Caco-2 (cell line): ENCODE measurements at regions of chr1 and their contacts with region 1.

Region 1: DNA sequence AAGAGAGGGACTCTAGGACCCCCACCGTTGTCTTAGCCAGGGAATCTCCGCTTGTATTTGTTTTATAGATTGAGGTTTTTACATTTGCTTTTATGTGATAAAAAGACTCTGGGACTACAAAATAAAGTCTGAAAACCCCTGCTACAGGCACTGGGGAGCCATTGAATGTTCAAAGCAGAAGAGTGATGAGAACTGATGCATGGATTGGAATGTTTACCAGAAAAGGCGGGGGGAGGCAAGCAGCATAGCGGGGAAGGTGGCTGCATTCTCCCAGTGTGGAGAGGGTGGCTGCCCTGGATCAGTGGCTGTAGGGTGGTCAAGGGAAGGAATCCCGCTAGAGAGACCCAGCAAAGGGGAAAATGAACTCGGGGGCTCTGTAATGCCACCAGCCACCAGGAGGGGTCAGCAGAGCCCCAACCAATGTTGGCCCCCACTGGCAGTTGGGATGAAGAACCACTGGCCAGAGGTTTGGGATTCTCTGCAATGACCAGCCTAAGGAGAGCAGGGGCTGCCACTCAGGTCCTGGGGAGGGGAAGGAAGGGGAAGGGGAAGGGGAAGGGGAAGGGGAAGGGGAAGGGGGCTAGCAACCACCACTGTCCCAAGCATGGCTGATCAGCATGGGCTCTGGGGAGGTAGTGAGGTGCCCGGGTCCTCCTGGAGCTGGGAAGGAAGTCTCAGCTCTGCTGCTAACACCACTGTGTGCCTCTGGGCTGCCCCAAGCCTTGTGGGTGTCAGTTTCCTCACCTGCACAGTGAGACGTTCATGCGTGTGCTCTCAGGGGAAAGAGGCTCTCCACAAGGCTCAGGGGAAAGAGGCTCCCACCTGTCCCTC is 19.2 kb upstream of the PEF1 start:
- DNase-seq: peak; percentile 44 to 73
- H3K4me3 ChIP-seq: no peak overlapping the region
- H3K4me3 Mint-ChIP-seq: no peak overlapping the region
- H3K27ac Mint-ChIP-seq: no peak overlapping the region
- H3K4me1 ChIP-seq: no peaks in the 10 kb centered on the region
- H3K4me1 Mint-ChIP-seq: no peaks in the 10 kb centered on the region
- H3K27me3 ChIP-seq: no peaks in the 10 kb centered on the region
- H3K27me3 Mint-ChIP-seq: no peaks in the 10 kb centered on the region
- CTCF ChIP-seq: peak; percentile 80 to 88

Region 2: GRCh38 chr1:31694069-31694963 is 30.5 kb after region 1 on chr1:
- CTCF ChIA-PET with region 1: interaction called, 10 read pairs
- POLR2A ChIA-PET with region 1: no interaction called
- intact Hi-C with region 1: no loop called
- DNase-seq: no peak
- H3K4me3 ChIP-seq: no peak overlapping the region
- H3K4me3 Mint-ChIP-seq: no peak overlapping the region
- H3K27ac Mint-ChIP-seq: no peak overlapping the region
- H3K4me1 ChIP-seq: no peaks in the 10 kb centered on the region
- H3K4me1 Mint-ChIP-seq: no peaks in the 10 kb centered on the region
- H3K27me3 ChIP-seq: no peaks in the 10 kb centered on the region
- H3K27me3 Mint-ChIP-seq: no peaks in the 10 kb centered on the region
- CTCF ChIP-seq: no peak

Region 3: GRCh38 chr1:31701137-31701736 is 37.4 kb after region 1 on chr1:
- CTCF ChIA-PET with region 1: no interaction called
- POLR2A ChIA-PET with region 1: no interaction called
- intact Hi-C with region 1: loop called (anchors 5 kb)
- DNase-seq: peak; percentile 50 to 68
- H3K4me3 ChIP-seq: no peak overlapping the region
- H3K4me3 Mint-ChIP-seq: no peak overlapping the region
- H3K27ac Mint-ChIP-seq: no peak overlapping the region
- H3K4me1 ChIP-seq: peaks cover 13% of the 10 kb centered on the region
- H3K4me1 Mint-ChIP-seq: peaks cover 7% of the 10 kb centered on the region
- H3K27me3 ChIP-seq: no peaks in the 10 kb centered on the region
- H3K27me3 Mint-ChIP-seq: no peaks in the 10 kb centered on the region
- CTCF ChIP-seq: no peak

Region 4: GRCh38 chr1:31745096-31745945 is 81.5 kb after region 1 on chr1:
- CTCF ChIA-PET with region 1: interaction called, 15 read pairs
- POLR2A ChIA-PET with region 1: no interaction called
- intact Hi-C with region 1: loop called (anchors 2 kb)
- DNase-seq: peak; percentile 52 to 60
- H3K4me3 ChIP-seq: no peak overlapping the region
- H3K4me3 Mint-ChIP-seq: no peak overlapping the region
- H3K27ac Mint-ChIP-seq: no peak overlapping the region
- H3K4me1 ChIP-seq: peaks cover 5% of the 10 kb centered on the region
- H3K4me1 Mint-ChIP-seq: peaks cover 14% of the 10 kb centered on the region
- H3K27me3 ChIP-seq: no peaks in the 10 kb centered on the region
- H3K27me3 Mint-ChIP-seq: no peaks in the 10 kb centered on the region
- CTCF ChIP-seq: peak; percentile 40 to 45

Region 5: DNA sequence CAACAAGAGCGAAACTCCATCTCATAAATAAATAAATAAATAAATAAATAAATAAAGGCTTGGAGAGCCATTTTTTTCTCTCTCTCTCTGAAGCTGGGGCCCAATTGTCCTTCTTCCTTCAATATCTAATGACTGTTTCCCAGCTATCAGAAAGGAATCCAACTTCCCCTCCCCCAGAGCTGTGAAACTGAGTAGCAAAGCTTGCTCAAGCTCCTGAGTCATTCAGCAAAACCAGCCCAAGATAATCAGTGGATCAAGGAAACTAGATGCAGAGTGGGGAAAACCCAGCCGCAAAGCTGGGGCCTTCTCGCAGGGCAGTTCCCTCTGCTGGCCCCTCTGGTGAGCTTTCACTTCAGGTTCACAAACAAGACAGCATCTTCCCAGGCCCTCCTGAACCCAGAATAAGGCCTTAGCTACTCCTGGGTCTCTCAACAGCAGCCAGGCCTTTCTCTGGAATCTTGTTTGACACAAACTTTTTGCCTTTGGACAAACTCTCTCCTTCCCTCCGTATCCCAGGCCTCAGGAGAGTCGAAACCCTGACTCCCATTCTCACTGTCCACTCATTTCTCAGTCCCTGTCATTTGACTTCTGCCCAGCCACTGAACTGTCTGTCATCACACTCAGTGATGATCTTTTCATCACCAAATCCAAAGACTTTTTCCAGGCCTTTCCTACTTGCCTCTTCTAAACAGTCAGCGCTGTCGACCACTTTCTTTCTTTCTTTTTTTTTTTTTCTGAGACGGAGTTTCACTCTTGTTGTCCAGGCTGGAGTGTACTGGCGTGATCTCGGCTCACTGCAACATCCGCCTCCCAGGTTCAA is 292.3 kb after region 1 on chr1:
- CTCF ChIA-PET with region 1: no interaction called
- POLR2A ChIA-PET with region 1: no interaction called
- intact Hi-C with region 1: loop called (anchors 5 kb)
- DNase-seq: peak; percentile 79 to 82
- H3K4me3 ChIP-seq: no peak overlapping the region
- H3K4me3 Mint-ChIP-seq: peak overlapping the region; percentile 27
- H3K27ac Mint-ChIP-seq: peak overlapping the region; percentile 99
- H3K4me1 ChIP-seq: peaks cover 26% of the 10 kb centered on the region
- H3K4me1 Mint-ChIP-seq: peaks cover 35% of the 10 kb centered on the region
- H3K27me3 ChIP-seq: no peaks in the 10 kb centered on the region
- H3K27me3 Mint-ChIP-seq: no peaks in the 10 kb centered on the region
- CTCF ChIP-seq: peak in 1 of 2 experiments; percentile 18